CD14-positive monocyte (primary cell): ENCODE measurements at regions of chr1 and their contacts with region 1.

Region 1: DNA sequence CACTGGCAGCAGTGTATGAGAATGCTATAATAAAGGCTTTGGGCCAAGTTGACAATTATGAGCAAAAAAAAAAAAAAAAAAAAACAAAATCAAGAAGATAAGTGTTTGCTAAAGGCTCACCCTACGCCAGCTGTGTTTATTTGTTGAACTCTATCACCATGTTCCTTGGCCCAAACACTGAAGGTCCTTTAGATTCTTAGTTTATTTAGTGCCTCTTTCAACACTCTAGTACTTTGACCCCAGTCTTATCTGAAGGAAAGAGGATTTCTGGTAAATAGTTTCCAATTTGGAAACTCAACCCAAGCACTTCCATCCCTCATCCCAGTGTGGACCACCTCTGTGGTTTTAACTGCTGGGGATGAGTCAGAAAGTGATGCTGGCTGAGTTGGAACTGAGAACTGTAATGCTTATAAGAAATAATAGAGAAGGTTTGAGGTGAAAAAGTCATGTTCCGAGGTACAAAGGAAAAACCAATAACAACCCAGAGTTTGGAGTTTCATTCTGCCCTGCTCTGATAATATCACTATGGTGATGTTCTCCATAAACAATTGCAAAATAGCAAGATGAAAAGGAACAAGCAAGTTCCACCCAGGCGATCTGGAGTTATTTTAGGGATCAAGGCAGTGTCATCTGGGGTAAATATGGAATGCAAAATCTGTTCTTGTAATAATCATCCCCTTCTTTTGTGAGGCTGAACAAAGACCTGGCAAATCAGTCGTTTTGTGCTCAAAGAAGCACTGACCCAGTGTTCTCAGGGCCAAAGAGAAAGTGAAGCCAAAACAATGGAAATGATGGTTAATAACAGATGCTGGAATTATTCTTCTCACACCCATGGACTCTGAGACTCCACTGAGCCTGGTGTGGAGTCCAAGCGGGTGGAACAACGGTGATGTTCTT is 19.7 kb upstream of the CAPZB start:
- DNase-seq: peak; percentile 46 to 56 (median 55)
- H3K4me3 ChIP-seq: peak overlapping the region in 1 of 3 experiments; percentile 55
- H3K4me3 Mint-ChIP-seq: peak overlapping the region; percentile 37 to 78
- H3K27ac ChIP-seq: peak overlapping the region; percentile 97 to 99
- H3K27ac Mint-ChIP-seq: peak overlapping the region; percentile 98 to 100 (median 99)
- H3K4me1 ChIP-seq: peaks cover 63 to 68% of the 10 kb centered on the region in 2 donors
- H3K4me1 Mint-ChIP-seq: peaks cover 62% of the 10 kb centered on the region
- H3K27me3 ChIP-seq: no peaks in the 10 kb centered on the region
- H3K27me3 Mint-ChIP-seq: peaks cover 0 to 2% (median 2%) of the 10 kb centered on the region in 3 donors
- CTCF ChIP-seq: no peak

Region 2: DNA sequence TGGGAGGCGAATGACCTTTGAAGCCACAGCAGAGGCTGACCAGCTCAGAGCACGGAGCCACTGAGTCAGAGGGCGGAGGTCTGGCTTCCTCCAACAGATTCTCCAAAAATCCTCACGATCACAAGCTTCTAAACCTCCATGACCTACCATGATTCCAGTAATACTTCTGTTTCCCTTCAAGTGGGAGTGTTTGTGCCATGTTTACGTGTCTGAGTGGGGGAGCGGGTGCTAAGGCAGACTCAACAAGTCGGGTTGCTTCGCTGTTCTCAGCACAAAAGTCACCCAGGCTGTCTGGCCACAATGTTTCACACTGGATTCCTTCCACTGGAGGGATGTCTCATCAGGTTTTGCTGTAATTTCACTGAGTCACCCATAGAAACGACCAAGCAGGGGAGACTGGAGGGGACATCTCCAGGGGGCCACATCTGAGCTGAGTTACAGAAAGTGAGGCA is 106.7 kb before region 1 on chr1:
- intact Hi-C with region 1: no loop called
- DNase-seq: no peak
- H3K4me3 ChIP-seq: no peak overlapping the region
- H3K4me3 Mint-ChIP-seq: no peak overlapping the region
- H3K27ac ChIP-seq: peak overlapping the region in 1 of 2 donors; percentile 36
- H3K27ac Mint-ChIP-seq: peak overlapping the region in 2 of 7 donors; percentile 33 to 78
- H3K4me1 ChIP-seq: no peaks in the 10 kb centered on the region
- H3K4me1 Mint-ChIP-seq: peaks cover 3% of the 10 kb centered on the region
- H3K27me3 ChIP-seq: no peaks in the 10 kb centered on the region
- H3K27me3 Mint-ChIP-seq: peaks cover 0 to 2% (median 0%) of the 10 kb centered on the region in 3 donors
- CTCF ChIP-seq: no peak

Region 3: GRCh38 chr1:19448491-19449439 is 56.3 kb before region 1 on chr1:
- intact Hi-C with region 1: loop called in 1 of 2 experiments (anchors 5 kb)
- DNase-seq: peak; percentile 48 to 84 (median 55)
- H3K4me3 ChIP-seq: peak overlapping the region in 1 of 3 experiments; percentile 40
- H3K4me3 Mint-ChIP-seq: peak overlapping the region; percentile 37 to 71
- H3K27ac ChIP-seq: peak overlapping the region; percentile 68 to 75
- H3K27ac Mint-ChIP-seq: peak overlapping the region; percentile 86 to 95 (median 91)
- H3K4me1 ChIP-seq: peaks cover 33% of the 10 kb centered on the region in 2 donors
- H3K4me1 Mint-ChIP-seq: peaks cover 61% of the 10 kb centered on the region
- H3K27me3 ChIP-seq: no peaks in the 10 kb centered on the region
- H3K27me3 Mint-ChIP-seq: peaks cover 0 to 5% (median 0%) of the 10 kb centered on the region in 3 donors
- CTCF ChIP-seq: no peak

Region 4: GRCh38 chr1:19468397-19468956 is 36.6 kb before region 1 on chr1:
- intact Hi-C with region 1: loop called in 1 of 2 experiments (anchors 2 kb)
- DNase-seq: peak; percentile 58 to 75 (median 72)
- H3K4me3 ChIP-seq: peak overlapping the region in 2 of 3 experiments; percentile 11 to 66
- H3K4me3 Mint-ChIP-seq: peak overlapping the region; percentile 66 to 87
- H3K27ac ChIP-seq: peak overlapping the region; percentile 94 to 95
- H3K27ac Mint-ChIP-seq: peak overlapping the region; percentile 96 to 99 (median 98)
- H3K4me1 ChIP-seq: peaks cover 58 to 77% of the 10 kb centered on the region in 2 donors
- H3K4me1 Mint-ChIP-seq: peaks cover 86% of the 10 kb centered on the region
- H3K27me3 ChIP-seq: no peaks in the 10 kb centered on the region
- H3K27me3 Mint-ChIP-seq: no peaks in the 10 kb centered on the region
- CTCF ChIP-seq: no peak

Region 5: DNA sequence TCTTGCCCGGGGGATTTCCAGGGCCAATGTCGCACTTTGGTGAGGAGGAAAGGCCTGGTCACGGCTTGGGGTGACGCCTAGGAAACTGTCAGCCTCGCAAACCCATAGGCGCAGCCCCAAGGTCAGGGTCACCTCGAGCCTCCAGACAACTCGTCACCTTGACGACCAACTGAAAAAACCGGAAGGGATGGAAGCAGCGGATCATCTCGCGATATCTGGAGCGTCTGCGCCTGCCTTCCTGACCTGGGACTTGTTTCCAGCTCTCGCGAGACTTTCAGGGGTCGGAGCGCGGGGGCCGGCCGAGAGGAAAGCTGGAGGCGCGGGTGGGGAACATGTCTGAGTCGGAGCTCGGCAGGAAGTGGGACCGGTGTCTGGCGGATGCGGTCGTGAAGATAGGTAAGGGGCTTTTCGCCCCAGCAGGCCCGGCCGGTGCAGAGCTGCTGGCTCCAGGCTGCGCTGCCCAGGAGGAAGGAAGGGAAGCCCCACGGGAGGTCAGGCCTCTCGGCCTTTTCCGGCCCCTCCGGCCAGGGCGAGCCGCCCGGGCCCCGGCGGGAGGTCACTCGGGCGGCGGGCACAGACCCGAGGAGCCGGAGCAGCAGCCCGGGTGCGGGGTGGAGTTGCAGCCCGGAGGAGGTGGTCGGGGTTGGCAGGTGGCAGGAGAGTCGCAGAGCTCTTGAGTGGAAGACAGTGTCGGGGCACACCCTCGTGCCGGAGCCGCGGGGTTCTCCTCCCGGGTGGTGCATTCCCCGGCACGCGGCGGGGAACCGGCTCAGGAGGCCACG is 91.9 kb after region 1 on chr1:
- intact Hi-C with region 1: loop called in 1 of 2 experiments (anchors 5 kb)
- DNase-seq: peak; percentile 99
- H3K4me3 ChIP-seq: peak overlapping the region; percentile 56 to 81 (median 69)
- H3K4me3 Mint-ChIP-seq: peak overlapping the region; percentile 98 to 100
- H3K27ac ChIP-seq: peak overlapping the region; percentile 94 to 95
- H3K27ac Mint-ChIP-seq: peak overlapping the region; percentile 98 to 100 (median 98)
- H3K4me1 ChIP-seq: peaks cover 20 to 28% of the 10 kb centered on the region in 2 donors
- H3K4me1 Mint-ChIP-seq: peaks cover 31% of the 10 kb centered on the region
- H3K27me3 ChIP-seq: no peaks in the 10 kb centered on the region
- H3K27me3 Mint-ChIP-seq: peaks cover 0 to 2% (median 1%) of the 10 kb centered on the region in 3 donors
- CTCF ChIP-seq: no peak

Region 6: DNA sequence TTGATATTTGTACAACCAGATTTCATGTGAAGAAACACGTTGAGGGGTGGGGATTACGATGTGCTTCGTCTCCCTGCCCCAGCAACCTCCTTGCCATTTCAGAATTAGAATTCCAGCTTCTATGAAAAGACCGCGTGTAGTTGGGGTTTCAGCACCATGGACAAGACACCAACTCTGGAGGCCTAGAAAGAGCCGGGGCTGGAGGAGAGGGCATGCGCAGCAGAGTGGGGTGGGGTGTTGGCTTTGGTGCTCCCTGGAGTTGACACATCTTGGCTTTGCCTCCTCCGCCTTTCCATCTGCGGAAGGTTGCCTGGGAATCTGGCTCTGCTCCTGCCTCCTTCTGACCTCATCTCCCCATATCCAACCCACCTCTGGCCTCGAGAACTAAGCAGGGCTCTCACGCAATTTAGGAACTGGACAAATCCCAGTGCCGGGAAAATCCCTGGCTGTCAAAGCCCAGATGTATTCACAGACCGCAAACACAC is 171.4 kb after region 1 on chr1:
- intact Hi-C with region 1: no loop called
- DNase-seq: no peak
- H3K4me3 ChIP-seq: no peak overlapping the region
- H3K4me3 Mint-ChIP-seq: no peak overlapping the region
- H3K27ac ChIP-seq: no peak overlapping the region
- H3K27ac Mint-ChIP-seq: peak overlapping the region in 1 of 7 donors; percentile 7
- H3K4me1 ChIP-seq: no peaks in the 10 kb centered on the region
- H3K4me1 Mint-ChIP-seq: peaks cover 2% of the 10 kb centered on the region
- H3K27me3 ChIP-seq: peaks cover 0 to 6% of the 10 kb centered on the region in 2 donors
- H3K27me3 Mint-ChIP-seq: peaks cover 6 to 10% (median 7%) of the 10 kb centered on the region in 3 donors
- CTCF ChIP-seq: no peak